ENCODE measurements at regions of chr5 and their contacts with region 1.

Region 1: DNA sequence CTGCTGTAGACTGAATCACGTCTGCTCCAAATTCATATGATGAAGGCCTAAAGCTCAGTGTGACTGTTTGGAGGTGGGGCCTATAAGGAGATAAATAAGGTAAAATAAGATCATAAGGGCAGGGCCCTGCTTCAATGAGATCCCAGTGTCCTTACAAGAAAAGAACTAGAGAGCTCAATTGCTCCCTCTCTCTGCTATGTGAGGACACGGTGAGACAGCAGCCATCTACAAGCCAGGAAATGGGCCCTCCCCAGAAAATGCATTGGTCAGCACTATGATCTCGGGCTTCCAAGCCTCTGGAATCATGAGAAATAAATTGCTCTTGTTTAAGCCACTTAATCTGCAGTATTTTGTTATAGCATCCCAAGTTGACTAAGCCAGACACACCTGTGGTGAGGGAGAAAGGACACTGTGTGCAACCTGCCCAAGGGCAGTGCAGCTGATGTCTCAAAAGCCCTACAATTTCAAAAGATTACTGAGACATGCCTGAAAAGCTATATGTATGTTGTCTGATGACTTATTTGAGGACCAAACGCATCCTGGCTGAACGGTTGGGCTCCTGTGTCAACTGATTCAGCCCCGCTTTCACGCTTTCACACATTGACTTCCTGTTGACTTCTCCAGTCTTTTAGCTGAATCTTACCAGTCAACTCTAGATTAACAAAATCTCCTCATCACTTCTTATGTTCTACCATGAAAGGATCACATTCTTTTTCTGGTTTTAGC is 13.2 kb downstream of the GZMK start:
- DNase-seq: peak; percentile 36 to 72 (median 54)
- H3K4me3 ChIP-seq: no peak overlapping the region
- H3K4me3 Mint-ChIP-seq: peak overlapping the region in 6 of 8 donors; percentile 25 to 65 (median 49)
- H3K27ac ChIP-seq: peak overlapping the region; percentile 19
- H3K27ac Mint-ChIP-seq: peak overlapping the region; percentile 24 to 96 (median 88)
- H3K4me1 ChIP-seq: peaks cover 25% of the 10 kb centered on the region
- H3K4me1 Mint-ChIP-seq: peaks cover 23 to 42% (median 32%) of the 10 kb centered on the region in 4 donors
- H3K27me3 ChIP-seq: no peaks in the 10 kb centered on the region
- H3K27me3 Mint-ChIP-seq: no peaks in the 10 kb centered on the region

Region 2: GRCh38 chr5:55021410-55021809 is 15.8 kb before region 1 on chr5:
- CTCF ChIA-PET with region 1: interaction called, 34 read pairs
- POLR2A ChIA-PET with region 1: interaction called, 52 read pairs
- intact Hi-C with region 1: loop called (anchors 2 kb)
- DNase-seq: no peak
- H3K4me3 ChIP-seq: no peak overlapping the region
- H3K4me3 Mint-ChIP-seq: peak overlapping the region in 6 of 8 donors; percentile 3 to 71 (median 46)
- H3K27ac ChIP-seq: no peak overlapping the region
- H3K27ac Mint-ChIP-seq: peak overlapping the region in 6 of 7 donors; percentile 49 to 92 (median 77)
- H3K4me1 ChIP-seq: peaks cover 46% of the 10 kb centered on the region
- H3K4me1 Mint-ChIP-seq: peaks cover 31 to 65% (median 50%) of the 10 kb centered on the region in 4 donors
- H3K27me3 ChIP-seq: no peaks in the 10 kb centered on the region
- H3K27me3 Mint-ChIP-seq: no peaks in the 10 kb centered on the region

Region 3: GRCh38 chr5:55062039-55062779 is 25.0 kb after region 1 on chr5:
- CTCF ChIA-PET with region 1: interaction called, 18 read pairs
- POLR2A ChIA-PET with region 1: interaction called, 33 read pairs
- intact Hi-C with region 1: no loop called
- DNase-seq: peak; percentile 42 to 63 (median 57)
- H3K4me3 ChIP-seq: peak overlapping the region; percentile 2 to 41
- H3K4me3 Mint-ChIP-seq: peak overlapping the region; percentile 82 to 91 (median 88)
- H3K27ac ChIP-seq: peak overlapping the region; percentile 1
- H3K27ac Mint-ChIP-seq: peak overlapping the region; percentile 50 to 92 (median 80)
- H3K4me1 ChIP-seq: peaks cover 38% of the 10 kb centered on the region
- H3K4me1 Mint-ChIP-seq: peaks cover 38 to 64% (median 50%) of the 10 kb centered on the region in 4 donors
- H3K27me3 ChIP-seq: no peaks in the 10 kb centered on the region
- H3K27me3 Mint-ChIP-seq: no peaks in the 10 kb centered on the region

Region 4: DNA sequence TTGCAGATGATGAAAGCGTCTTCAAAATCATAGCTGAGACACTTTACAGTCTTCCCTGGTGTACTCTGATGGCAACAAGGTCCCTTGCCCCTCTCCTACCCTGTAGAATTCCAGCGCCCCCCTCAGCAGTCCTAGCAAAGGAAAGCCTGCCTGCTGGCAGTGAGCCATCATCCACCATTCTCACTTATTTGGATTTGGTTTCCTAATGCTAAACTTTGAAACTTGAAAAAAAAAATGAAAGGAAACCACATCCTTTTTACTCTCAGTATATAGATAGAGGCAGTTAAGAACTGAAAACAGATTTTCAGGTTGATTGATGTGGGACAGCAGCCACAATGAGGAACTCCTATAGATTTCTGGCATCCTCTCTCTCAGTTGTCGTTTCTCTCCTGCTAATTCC is 65.1 kb after region 1 on chr5 and contains the start of gene GZMA:
- CTCF ChIA-PET with region 1: interaction called, 20 read pairs
- POLR2A ChIA-PET with region 1: interaction called, 54 read pairs
- intact Hi-C with region 1: no loop called
- DNase-seq: peak; percentile 66 to 81 (median 76)
- H3K4me3 ChIP-seq: peak within 1 kb of the TSS; percentile 34 to 56
- H3K4me3 Mint-ChIP-seq: peak within 1 kb of the TSS; percentile 83 to 96 (median 90)
- H3K27ac ChIP-seq: peak within 1 kb of the TSS; percentile 32
- H3K27ac Mint-ChIP-seq: peak within 1 kb of the TSS; percentile 78 to 96 (median 91)
- H3K4me1 ChIP-seq: peaks cover 61% of the 10 kb centered on the region
- H3K4me1 Mint-ChIP-seq: peaks cover 58 to 89% (median 75%) of the 10 kb centered on the region in 4 donors
- H3K27me3 ChIP-seq: no peaks in the 10 kb centered on the region
- H3K27me3 Mint-ChIP-seq: no peaks in the 10 kb centered on the region
- total RNA-seq, gene GZMA: 25.0 to 28.2 TPM